PC-9 (cell line): ENCODE measurements at regions of chr13 and their contacts with region 1.

Region 1: GRCh38 chr13:52450012-52450792 is at the start of gene VPS36:
- DNase-seq: peak; percentile 76 to 96
- H3K4me3 ChIP-seq: peak within 1 kb of the TSS; percentile 65
- H3K27ac ChIP-seq: peak within 1 kb of the TSS; percentile 58
- H3K4me1 ChIP-seq: peaks cover 52% of the 10 kb centered on the region
- H3K27me3 ChIP-seq: no peaks in the 10 kb centered on the region
- CTCF ChIP-seq: peak; percentile 95
- total RNA-seq, gene VPS36: 28.1 and 31.6 TPM in 2 replicates

Region 2: DNA sequence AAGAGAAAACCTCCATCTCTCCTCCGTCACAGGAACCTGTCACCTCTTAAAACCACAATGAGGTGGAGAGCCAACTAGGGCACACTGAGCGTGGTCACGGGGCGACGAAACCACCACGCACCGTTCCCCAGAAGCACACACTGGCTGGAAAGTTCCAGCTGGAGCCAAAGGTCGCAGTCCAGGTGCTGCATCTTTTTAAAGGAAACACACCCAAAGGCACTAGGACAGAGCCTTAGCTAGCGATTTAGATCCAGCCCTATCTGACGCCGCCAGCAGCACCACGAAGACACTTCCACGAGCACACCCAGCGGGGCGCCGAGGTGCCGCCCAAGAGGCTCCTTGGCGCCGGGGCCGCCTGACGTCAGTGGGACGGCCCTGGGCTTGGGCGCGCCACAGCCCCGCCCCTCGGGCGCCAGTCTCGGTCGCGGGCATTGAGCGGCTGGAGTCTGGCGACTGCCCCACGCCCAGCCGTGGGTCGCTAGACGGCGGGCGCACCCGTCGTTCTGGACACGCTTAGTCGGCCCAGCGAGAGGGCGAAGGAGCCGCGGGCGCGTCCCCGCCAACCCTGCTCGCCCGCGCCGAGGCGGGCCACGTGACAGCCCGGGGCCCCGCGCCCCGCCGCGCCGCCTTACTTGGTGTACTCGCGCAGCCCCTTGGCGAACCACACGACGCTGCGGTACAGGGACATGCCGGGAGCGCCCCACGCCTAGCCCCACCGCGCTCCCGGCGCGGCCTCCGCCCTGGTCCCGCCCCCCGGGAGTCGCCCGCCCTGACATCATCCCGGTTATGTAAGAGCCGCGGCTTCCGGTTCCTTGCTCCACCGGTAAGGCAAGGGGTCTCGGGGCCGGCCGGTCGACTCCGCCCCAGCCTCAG is 646.5 kb before region 1 on chr13 and contains the start of gene DHRS12:
- CTCF ChIA-PET with region 1: no interaction called
- POLR2A ChIA-PET with region 1: no interaction called
- intact Hi-C with region 1: loop called (anchors 5 kb)
- DNase-seq: peak; percentile 60 to 83
- H3K4me3 ChIP-seq: peak within 1 kb of the TSS; percentile 69
- H3K27ac ChIP-seq: peak within 1 kb of the TSS; percentile 54
- H3K4me1 ChIP-seq: peaks cover 26% of the 10 kb centered on the region
- H3K27me3 ChIP-seq: no peaks in the 10 kb centered on the region
- CTCF ChIP-seq: no peak
- total RNA-seq, gene DHRS12: 6.9 and 11.9 TPM in 2 replicates

Region 3: DNA sequence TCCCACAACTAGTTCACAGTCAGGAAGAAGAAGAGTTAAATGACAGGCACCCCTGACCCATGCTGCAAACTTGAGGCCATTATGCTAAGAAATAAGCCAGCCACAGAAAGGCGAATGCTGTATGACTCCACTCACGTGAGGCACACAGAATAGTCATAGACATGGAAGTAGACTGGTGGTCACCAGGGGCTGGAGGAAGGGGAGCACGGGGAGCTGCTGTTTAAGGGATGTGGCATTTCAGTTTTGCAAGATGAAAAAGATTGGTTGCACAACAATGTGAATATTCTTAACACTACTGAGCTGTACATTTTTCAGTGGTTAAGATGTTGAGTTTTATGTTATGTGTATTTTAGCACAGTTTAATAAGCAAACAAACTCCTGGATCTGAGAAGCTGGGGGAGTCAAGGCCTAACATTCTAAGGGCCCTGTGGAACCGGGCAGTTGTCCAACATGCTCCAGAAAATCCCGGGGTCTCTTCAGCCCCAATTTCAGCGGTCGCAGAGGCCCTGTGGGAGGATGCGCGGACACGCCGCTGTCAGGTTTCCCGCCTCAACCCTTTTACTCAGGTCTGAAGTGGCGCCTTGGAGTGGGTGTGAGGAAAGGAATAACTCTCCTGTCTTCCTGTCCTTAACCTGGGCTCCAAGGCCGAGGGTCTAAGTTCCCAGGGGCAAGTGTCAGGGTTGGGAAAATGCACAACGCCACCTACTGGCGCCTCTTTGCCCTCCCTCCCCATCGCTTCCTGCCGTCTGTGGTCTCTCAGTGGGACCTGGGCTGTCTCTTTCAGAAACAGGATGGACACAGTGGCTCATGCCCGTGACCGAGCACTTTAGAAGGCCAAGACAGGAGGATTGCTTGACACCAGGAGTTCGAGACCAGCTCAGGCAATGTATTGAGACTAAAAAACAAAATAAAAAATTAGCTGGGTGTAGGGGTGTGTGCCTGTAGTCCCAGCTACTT is 600.8 kb before region 1 on chr13:
- CTCF ChIA-PET with region 1: interaction called, 13 read pairs
- POLR2A ChIA-PET with region 1: no interaction called
- intact Hi-C with region 1: no loop called
- DNase-seq: peak in 1 of 2 experiments; percentile 7
- H3K4me3 ChIP-seq: no peak overlapping the region
- H3K27ac ChIP-seq: no peak overlapping the region
- H3K4me1 ChIP-seq: no peaks in the 10 kb centered on the region
- H3K27me3 ChIP-seq: 0 out of 2 replicates have a peak, but pooled peaks cover 5% of the 10 kb centered on the region
- CTCF ChIP-seq: peak; percentile 52; the same call in 1 of the 2 replicates

Region 4: GRCh38 chr13:52011632-52012511 is 438.3 kb before region 1 on chr13 and contains the start of gene ALG11:
- CTCF ChIA-PET with region 1: interaction called, 3 read pairs
- POLR2A ChIA-PET with region 1: no interaction called
- intact Hi-C with region 1: loop called (anchors 5 kb)
- DNase-seq: peak; percentile 93 to 99
- H3K4me3 ChIP-seq: peak within 1 kb of the TSS; percentile 97
- H3K27ac ChIP-seq: peak within 1 kb of the TSS; percentile 41
- H3K4me1 ChIP-seq: peaks cover 9% of the 10 kb centered on the region
- H3K27me3 ChIP-seq: peaks cover 4% of the 10 kb centered on the region; the same call in 1 of the 2 replicates
- CTCF ChIP-seq: no peak
- total RNA-seq, gene ALG11: 15.0 and 15.7 TPM in 2 replicates

Region 5: GRCh38 chr13:52128714-52129700 is 321.2 kb before region 1 on chr13 and contains the start of gene NEK5:
- CTCF ChIA-PET with region 1: interaction called, 3 read pairs
- POLR2A ChIA-PET with region 1: no interaction called
- intact Hi-C with region 1: loop called (anchors 5 kb)
- DNase-seq: peak in 1 of 2 experiments; percentile 65
- H3K4me3 ChIP-seq: peak within 1 kb of the TSS; percentile 63
- H3K27ac ChIP-seq: no peak within 1 kb of the TSS
- H3K4me1 ChIP-seq: peaks cover 11% of the 10 kb centered on the region
- H3K27me3 ChIP-seq: no peaks in the 10 kb centered on the region; the same call in 1 of the 2 replicates
- CTCF ChIP-seq: peak; percentile 72
- total RNA-seq, gene NEK5: not detected in 2 replicates

Region 6: DNA sequence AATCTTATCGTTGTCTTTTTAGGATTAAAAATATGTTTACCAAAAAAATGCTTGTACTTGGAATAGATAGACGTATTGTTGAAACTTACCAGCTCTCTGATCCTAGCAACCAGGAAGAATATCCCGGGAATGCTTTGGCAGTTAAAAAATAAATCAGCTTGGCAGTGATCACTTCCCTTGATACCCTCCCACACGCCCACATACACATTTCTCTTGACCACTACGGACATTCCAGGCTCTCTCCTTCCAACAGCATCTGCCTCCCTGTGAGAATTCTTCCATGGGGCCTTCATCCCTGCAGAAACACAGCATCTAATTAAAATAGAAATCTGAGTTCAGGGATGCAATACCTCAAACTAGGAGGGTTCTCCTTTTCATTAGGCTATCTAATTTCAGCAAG is 102.1 kb before region 1 on chr13:
- CTCF ChIA-PET with region 1: interaction called, 8 read pairs
- POLR2A ChIA-PET with region 1: no interaction called
- intact Hi-C with region 1: loop called (anchors 1 kb)
- DNase-seq: no peak
- H3K4me3 ChIP-seq: no peak overlapping the region
- H3K27ac ChIP-seq: peak overlapping the region; percentile 1; the same call in 1 of the 2 replicates
- H3K4me1 ChIP-seq: peaks cover 17% of the 10 kb centered on the region
- H3K27me3 ChIP-seq: no peaks in the 10 kb centered on the region
- CTCF ChIP-seq: no peak

Region 7: DNA sequence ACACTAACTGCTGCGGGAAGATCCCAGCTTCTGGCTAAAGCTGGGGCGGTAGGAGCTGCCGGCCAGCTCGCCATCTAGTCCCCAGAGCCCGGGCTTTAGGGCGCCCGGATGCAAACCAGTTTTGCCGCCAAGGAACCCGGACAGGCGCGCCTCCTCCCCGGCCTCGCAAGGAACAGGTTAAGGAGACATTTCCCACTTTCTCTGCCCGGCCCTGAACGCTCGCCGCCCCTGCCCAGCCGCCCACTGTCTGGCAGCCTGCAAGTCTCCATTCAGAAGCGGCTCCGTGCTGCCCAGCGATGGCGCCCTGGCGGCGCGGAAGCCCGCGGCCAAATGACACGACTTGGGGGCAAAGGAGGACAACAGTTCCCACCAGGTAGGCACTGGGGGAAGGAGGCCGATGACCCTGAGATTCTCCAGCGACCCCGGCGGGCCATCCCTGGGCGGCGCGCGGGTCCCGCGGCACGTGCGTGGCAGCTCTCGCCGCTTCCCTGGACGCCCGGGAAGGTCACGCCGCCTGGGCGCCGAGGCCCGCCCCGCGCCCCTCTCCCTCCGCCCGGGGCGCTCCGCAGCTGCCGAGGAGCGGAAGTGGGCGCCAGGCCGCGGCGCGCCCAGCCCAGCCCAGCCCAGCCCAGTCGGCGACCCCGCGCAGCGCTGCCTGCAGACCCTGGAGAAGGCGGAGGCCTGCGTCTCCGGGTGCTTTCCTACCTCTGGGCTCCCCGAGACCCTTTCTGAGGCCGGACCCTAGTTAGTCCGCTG is 149.8 kb after region 1 on chr13:
- CTCF ChIA-PET with region 1: no interaction called
- POLR2A ChIA-PET with region 1: no interaction called
- intact Hi-C with region 1: no loop called
- DNase-seq: peak in 1 of 2 experiments; percentile 29
- H3K4me3 ChIP-seq: peak overlapping the region; percentile 53; the same call in 1 of the 2 replicates
- H3K27ac ChIP-seq: no peak overlapping the region
- H3K4me1 ChIP-seq: no peaks in the 10 kb centered on the region
- H3K27me3 ChIP-seq: no peaks in the 10 kb centered on the region
- CTCF ChIP-seq: no peak